ENCODE measurements at regions of chr10 and their contacts with region 1.

Region 1: DNA sequence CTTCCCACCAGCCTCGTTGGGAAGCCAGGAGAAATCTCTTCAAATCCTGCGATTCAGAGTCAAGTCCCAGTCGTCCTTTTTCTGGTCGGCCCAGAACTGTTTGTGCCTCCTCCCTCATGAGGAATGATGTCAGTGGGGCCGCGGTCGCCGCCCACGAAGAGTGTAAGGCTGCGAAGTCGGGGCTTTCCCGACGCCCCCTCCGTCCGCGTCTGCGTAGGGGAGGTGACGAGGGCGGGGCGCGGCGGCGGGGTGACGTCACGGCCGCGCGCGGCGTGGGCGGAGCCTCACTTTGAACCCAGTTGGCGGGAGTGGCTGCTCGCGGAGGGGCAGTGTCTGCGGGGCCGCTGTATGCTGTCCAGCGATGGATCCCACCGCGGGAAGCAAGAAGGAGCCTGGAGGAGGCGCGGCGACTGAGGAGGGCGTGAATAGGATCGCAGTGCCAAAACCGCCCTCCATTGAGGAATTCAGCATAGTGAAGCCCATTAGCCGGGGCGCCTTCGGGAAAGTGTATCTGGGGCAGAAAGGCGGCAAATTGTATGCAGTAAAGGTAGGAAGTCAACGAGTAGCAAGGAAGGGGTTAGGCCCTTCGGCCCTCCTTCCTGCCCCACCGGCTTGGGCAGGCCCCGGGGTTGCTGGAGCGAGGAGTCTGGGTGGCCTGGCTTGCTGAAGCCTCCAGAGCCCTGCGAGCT is at the start of gene MASTL:
- DNase-seq: peak; percentile 82 to 95 (median 90)
- H3K4me3 ChIP-seq: peak within 1 kb of the TSS; percentile 69 to 100 (median 96)
- H3K27ac ChIP-seq: peak within 1 kb of the TSS; percentile 87 to 100 (median 98)
- H3K27me3 ChIP-seq: no peaks in the 10 kb centered on the region
- CTCF ChIP-seq: peak in 5 of 56 donors; percentile 5 to 21 (median 11)
- total RNA-seq, gene MASTL: 2.5 to 7.8 (median 5.4) TPM

Region 2: DNA sequence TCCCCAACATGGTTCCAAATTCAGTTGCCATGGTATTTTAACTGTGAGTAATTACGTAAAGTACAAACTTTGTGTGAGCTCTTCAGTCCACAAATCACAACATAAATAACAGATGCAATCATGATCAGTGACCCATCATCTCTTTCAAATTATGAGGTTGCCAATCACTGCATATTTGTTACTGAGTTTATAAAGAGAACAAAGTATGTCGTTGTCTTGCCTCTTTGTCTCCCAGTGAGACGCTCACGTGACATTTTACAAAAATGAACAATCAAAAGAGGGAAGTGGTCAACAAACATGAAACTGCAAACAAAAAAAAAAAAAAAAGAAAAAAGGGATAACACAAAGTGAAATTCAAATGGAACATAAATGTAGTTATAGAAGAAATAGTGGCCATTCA is 580.4 kb before region 1 on chr10:
- intact Hi-C with region 1: no loop called
- DNase-seq: no peak
- H3K4me3 ChIP-seq: no peak overlapping the region
- H3K27ac ChIP-seq: no peak overlapping the region
- H3K27me3 ChIP-seq: peaks cover 0 to 11% (median 0%) of the 10 kb centered on the region in 45 donors
- CTCF ChIP-seq: no peak

Region 3: GRCh38 chr10:27099916-27100812 is 55.0 kb before region 1 on chr10 and contains the start of gene ANKRD26:
- intact Hi-C with region 1: loop called (anchors 2 to 5 kb)
- DNase-seq: peak; percentile 91 to 96 (median 94)
- H3K4me3 ChIP-seq: peak within 1 kb of the TSS; percentile 64 to 97 (median 86)
- H3K27ac ChIP-seq: peak within 1 kb of the TSS; percentile 55 to 98 (median 91)
- H3K27me3 ChIP-seq: no peaks in the 10 kb centered on the region
- CTCF ChIP-seq: peak in 33 of 56 donors; percentile 4 to 57 (median 37)
- total RNA-seq, gene ANKRD26: 18.9 to 64.2 (median 34.3) TPM

Measured in dorsolateral prefrontal cortex (tissue), 120 donors.